ENCODE measurements at regions of chr5 and their contacts with region 1.

Region 1: DNA sequence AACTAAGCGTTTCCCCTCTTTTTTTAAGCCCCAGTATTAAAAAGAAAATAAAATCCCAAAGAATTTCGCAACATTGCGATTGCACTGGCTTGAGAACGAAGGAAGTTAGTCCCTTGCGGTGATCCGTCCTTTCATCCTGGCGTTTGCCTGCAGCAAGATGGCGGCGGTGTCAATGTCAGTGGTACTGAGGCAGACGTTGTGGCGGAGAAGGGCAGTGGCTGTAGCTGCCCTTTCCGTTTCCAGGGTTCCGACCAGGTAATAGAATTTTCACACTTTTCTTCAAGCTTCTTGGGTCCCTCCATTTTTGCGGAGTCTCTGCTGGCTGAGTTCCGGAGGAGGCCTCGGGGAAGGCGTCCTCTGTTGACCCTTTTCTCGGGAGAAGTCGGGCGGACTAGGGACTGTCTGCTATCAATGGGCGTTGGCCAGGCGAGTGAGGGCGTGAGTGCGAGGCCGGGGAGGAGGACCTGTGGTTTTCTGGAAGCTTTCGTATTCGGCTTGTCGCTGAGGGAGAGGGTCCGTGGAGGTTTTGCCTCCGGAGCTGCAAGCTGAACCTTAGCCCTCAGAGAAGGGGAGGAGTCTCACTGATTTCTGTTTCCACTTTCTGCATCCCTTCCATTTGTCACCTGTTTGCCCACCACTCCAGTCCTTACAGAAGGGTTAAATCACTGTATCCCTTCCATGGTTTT is at the start of gene NDUFS4:
- DNase-seq: peak; percentile 85 to 92 (median 90)
- ATAC-seq: peak; percentile 91 to 97 (median 96)
- H3K4me3 ChIP-seq: peak within 1 kb of the TSS; percentile 66 to 92 (median 74)
- H3K27ac ChIP-seq: peak within 1 kb of the TSS; percentile 73 to 97 (median 92)
- H3K4me1 ChIP-seq: peaks cover 0 to 41% (median 26%) of the 10 kb centered on the region in 12 donors
- H3K27me3 ChIP-seq: peaks cover 0 to 4% (median 0%) of the 10 kb centered on the region in 9 donors
- CTCF ChIP-seq: peak in 1 of 12 donors; percentile 24
- POLR2A ChIP-seq: peak in 1 of 2 donors; percentile 45
- total RNA-seq, gene NDUFS4: 109 to 259 (median 185) TPM

Region 2: DNA sequence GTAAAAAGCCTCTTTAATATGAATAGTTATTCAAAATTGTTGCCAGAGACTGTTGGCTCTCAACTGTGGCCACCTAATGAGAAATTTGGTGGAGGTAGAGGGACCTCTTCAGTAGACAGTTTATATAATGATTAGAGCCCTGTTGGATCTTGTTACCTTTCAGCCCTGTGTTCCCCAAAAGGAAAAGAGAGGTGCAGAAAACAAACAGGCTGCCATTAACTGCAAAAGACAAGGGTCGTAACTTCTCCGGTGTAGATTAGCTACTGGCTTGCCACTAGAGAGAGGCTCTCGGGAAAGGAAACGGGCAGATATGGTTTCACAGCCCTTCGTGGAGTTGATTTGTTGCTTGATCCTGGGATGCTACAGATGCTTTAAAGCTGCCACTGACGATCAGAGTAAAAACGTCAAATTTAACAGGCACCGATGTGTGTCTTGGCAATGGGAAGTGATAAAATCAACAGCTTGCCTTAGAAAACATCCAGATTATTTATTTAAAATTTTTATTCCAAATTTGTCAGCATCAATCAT is 72.4 kb before region 1 on chr5:
- intact Hi-C with region 1: loop called in 2 of 10 experiments (anchors 5 kb)
- DNase-seq: no peak
- ATAC-seq: no peak
- H3K4me3 ChIP-seq: no peak overlapping the region
- H3K27ac ChIP-seq: no peak overlapping the region
- H3K4me1 ChIP-seq: peaks cover 0 to 12% (median 0%) of the 10 kb centered on the region in 12 donors
- H3K27me3 ChIP-seq: peaks cover 0 to 3% (median 0%) of the 10 kb centered on the region in 9 donors
- CTCF ChIP-seq: no peak
- POLR2A ChIP-seq: no peak

Region 3: DNA sequence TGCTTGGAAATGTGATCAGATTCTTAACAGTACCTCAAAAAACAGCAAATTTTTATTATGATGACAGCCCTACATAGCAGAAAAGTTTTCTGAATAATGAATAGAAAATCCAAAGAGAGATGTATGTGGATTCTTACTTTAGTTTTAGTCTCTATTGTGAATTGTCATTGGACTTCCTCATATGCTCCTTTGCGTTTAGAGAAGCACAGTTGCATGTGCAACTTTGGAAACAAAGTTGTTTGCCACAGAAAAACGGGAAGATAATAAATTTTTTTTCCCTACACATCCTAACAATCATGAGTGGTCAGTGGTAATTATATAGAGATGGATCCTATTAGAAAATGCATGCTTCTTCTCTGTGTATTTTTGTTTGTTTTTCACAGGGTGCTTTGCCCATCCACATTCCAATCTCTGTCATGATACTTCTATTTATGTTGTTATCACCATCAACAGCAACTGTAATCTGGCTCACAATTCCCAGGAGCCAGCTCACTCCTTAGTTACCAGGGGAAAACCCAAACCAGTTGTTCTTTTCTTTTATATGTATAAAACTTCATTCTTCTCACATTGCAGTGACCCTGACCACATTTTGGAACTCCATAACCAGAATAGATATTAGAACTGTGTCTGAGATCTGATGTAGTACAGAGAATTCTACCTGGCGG is 118.5 kb after region 1 on chr5:
- intact Hi-C with region 1: loop called in 2 of 10 experiments (anchors 10 kb)
- DNase-seq: no peak
- ATAC-seq: no peak
- H3K4me3 ChIP-seq: no peak overlapping the region
- H3K27ac ChIP-seq: no peak overlapping the region
- H3K4me1 ChIP-seq: peaks cover 0 to 33% (median 6%) of the 10 kb centered on the region in 12 donors
- H3K27me3 ChIP-seq: no peaks in the 10 kb centered on the region
- CTCF ChIP-seq: no peak
- POLR2A ChIP-seq: no peak

Region 4: GRCh38 chr5:53856506-53856905 is 295.9 kb after region 1 on chr5:
- intact Hi-C with region 1: no loop called
- DNase-seq: no peak
- ATAC-seq: no peak
- H3K4me3 ChIP-seq: no peak overlapping the region
- H3K27ac ChIP-seq: no peak overlapping the region
- H3K4me1 ChIP-seq: no peaks in the 10 kb centered on the region
- H3K27me3 ChIP-seq: no peaks in the 10 kb centered on the region
- CTCF ChIP-seq: no peak
- POLR2A ChIP-seq: no peak